ENCODE measurements at regions of chr1 and their contacts with region 1.

Region 1: GRCh38 chr1:50322579-50322978 is 100.7 kb downstream of the DMRTA2 start:
- DNase-seq: no peak

Region 2: GRCh38 chr1:49086327-49086726 is 1236.3 kb before region 1 on chr1:
- intact Hi-C with region 1: loop called in 1 of 2 experiments (anchors 5 kb)
- DNase-seq: no peak

Region 3: GRCh38 chr1:50289495-50289894 is 33.1 kb before region 1 on chr1:
- intact Hi-C with region 1: no loop called
- DNase-seq: no peak

Measured in posterior vena cava (tissue), 2 donors.